CD4-positive, alpha-beta memory T cell (primary cell): ENCODE measurements at regions of chr7 and their contacts with region 1.

Region 1: DNA sequence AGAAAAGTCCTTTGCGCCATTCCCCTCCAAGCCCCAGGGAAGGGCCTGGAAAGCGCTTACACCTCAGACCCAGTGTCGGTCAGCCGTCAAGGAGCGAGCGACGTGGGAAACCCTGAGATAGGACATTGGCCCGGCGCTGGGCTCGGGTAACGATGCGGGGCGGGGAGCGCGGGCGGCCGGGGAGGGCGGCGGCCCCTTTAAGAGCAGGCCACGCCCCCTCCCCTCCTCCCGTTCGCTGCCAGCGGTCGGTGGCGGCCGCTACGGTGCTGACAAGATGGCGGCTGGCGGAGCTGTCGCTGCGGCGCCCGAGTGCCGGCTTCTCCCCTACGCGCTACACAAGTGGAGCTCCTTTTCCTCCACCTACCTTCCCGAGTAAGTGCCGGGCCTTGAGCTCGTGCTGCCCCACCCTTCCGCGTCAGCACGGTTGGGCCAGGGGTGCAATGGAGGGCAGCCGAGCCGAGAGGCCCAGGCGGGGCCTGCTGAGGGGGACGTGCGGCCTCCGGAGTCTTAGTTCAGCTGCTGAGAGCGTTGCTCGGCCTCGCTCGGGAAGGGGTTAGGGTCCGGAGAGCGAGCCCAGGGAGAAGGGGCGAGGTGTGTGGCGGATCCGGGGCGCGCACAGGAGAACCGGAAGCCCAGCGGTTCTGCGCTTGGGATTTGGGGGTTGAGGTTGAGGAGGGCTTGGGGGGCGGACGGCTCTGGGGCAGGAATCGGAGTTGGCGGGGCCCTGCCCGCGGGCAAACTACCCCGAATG is at the start of gene MKLN1:
- DNase-seq: peak; percentile 85 to 88 (median 88)
- H3K4me3 ChIP-seq: peak within 1 kb of the TSS; percentile 57 to 93
- H3K4me3 Mint-ChIP-seq: peak within 1 kb of the TSS; percentile 90 to 99 (median 96)
- H3K27ac ChIP-seq: peak within 1 kb of the TSS; percentile 95
- H3K27ac Mint-ChIP-seq: peak within 1 kb of the TSS; percentile 94 to 99 (median 96)
- H3K4me1 ChIP-seq: peaks cover 63% of the 10 kb centered on the region
- H3K4me1 Mint-ChIP-seq: peaks cover 48 to 86% (median 63%) of the 10 kb centered on the region in 4 donors
- H3K27me3 ChIP-seq: no peaks in the 10 kb centered on the region
- H3K27me3 Mint-ChIP-seq: no peaks in the 10 kb centered on the region
- total RNA-seq, gene MKLN1: 60.7 to 61.0 TPM

Region 2: DNA sequence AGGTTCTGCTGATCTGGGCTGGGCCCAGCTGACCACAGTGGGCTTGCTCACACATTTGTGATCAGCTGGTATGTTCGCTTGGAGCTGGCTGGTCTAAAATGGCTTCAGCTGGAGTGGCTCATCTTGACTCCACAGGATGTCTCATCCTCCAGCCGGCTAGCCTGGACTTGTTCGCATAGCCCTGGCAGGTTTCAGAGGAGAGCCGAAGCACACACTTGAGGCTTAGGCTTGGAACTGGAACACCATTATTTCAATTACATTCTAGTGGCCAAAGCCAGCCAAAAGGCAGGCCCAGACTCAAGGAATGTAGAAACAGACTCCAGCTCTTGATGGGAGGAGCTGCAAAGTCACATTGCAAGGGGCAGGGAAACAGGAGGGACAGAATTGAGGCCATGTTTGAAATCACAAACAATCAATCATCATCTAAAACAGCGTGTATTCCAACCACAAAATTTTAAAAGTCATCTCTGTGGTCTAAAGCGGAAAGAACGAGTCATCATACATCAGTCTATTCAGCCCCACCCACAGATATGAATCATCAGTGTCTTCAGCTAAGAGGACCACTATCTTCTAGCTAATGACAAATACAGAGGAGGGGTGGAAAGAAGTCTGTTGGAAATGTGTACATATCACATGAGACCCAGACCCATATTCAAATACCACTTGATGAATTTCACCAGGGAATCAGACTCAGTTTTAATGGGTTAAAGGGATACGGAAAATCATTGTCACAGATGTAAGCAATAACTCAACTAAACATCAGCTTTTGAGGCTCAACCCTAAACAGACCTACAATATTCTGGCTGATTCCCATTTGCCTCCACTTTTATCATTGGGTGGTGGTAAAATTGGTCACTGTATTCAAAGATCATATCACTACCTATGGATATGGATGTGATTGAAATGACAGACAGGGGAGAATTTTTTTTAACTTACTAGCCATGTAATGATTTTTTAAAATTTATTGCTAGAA is 139.1 kb before region 1 on chr7:
- CTCF ChIA-PET with region 1: interaction called, 3 read pairs
- POLR2A ChIA-PET with region 1: interaction called, 3 read pairs
- intact Hi-C with region 1: loop called (anchors 1 kb)
- DNase-seq: peak; percentile 83 to 88 (median 84)
- H3K4me3 ChIP-seq: no peak overlapping the region
- H3K4me3 Mint-ChIP-seq: peak overlapping the region; percentile 21 to 79 (median 69)
- H3K27ac ChIP-seq: peak overlapping the region; percentile 54
- H3K27ac Mint-ChIP-seq: peak overlapping the region; percentile 89 to 98 (median 95)
- H3K4me1 ChIP-seq: peaks cover 40% of the 10 kb centered on the region
- H3K4me1 Mint-ChIP-seq: peaks cover 26 to 43% (median 30%) of the 10 kb centered on the region in 4 donors
- H3K27me3 ChIP-seq: no peaks in the 10 kb centered on the region
- H3K27me3 Mint-ChIP-seq: peaks cover 0 to 2% of the 10 kb centered on the region in 2 donors

Region 3: DNA sequence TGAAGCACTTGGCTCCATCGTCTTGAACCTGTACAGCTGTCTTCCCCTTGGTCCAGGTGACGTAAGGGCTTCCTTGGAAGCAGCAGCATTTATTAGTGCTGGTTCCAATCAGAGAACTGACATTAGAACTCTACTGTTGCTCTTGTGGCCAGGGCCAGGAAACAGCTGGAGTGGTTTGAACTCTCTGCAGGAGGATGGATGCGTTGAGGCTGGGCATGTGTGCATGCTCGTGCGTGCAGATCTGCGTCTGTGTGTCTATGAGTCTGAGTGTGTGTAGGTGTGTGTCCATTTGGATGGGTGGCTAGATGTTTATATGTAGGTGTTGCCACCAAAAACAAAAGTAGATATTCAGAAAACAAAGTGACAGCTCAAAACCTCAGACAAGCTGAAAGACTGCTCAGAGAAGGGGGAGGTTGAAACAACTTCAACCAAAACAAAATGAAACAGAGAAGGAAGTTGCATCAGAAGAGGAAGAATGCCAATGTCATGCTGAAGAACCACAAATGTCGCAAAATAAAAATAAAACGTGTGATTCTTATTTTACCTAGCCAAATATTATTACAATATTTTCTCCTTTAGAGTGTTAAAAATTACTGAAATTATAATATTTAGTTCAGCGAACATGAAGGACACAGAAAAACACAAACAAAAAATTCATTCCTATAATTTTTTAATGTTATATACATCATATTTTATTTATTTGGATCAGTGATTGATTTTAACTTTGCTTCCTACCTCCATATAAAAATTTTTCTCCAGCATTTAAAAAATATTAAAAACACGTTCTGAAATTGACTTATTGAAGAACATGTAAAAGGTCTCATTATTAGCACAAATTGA is 96.2 kb before region 1 on chr7:
- CTCF ChIA-PET with region 1: no interaction called
- POLR2A ChIA-PET with region 1: interaction called, 4 read pairs
- intact Hi-C with region 1: loop called (anchors 1 kb)
- DNase-seq: peak; percentile 80 to 90 (median 82)
- H3K4me3 ChIP-seq: peak overlapping the region; percentile 25 to 31
- H3K4me3 Mint-ChIP-seq: peak overlapping the region; percentile 62 to 86 (median 80)
- H3K27ac ChIP-seq: peak overlapping the region; percentile 60
- H3K27ac Mint-ChIP-seq: peak overlapping the region; percentile 85 to 94 (median 92)
- H3K4me1 ChIP-seq: peaks cover 41% of the 10 kb centered on the region
- H3K4me1 Mint-ChIP-seq: peaks cover 20 to 46% (median 33%) of the 10 kb centered on the region in 4 donors
- H3K27me3 ChIP-seq: no peaks in the 10 kb centered on the region
- H3K27me3 Mint-ChIP-seq: no peaks in the 10 kb centered on the region

Region 4: GRCh38 chr7:131312838-131313237 is 15.0 kb before region 1 on chr7:
- CTCF ChIA-PET with region 1: no interaction called
- POLR2A ChIA-PET with region 1: no interaction called
- intact Hi-C with region 1: no loop called
- DNase-seq: no peak
- H3K4me3 ChIP-seq: no peak overlapping the region
- H3K4me3 Mint-ChIP-seq: no peak overlapping the region
- H3K27ac ChIP-seq: no peak overlapping the region
- H3K27ac Mint-ChIP-seq: no peak overlapping the region
- H3K4me1 ChIP-seq: no peaks in the 10 kb centered on the region
- H3K4me1 Mint-ChIP-seq: no peaks in the 10 kb centered on the region
- H3K27me3 ChIP-seq: no peaks in the 10 kb centered on the region
- H3K27me3 Mint-ChIP-seq: peaks cover 5% of the 10 kb centered on the region in 2 donors